Esophagus muscularis mucosa (tissue), 4 donors: ENCODE measurements at regions of chr10 and their contacts with region 1.

Region 1: DNA sequence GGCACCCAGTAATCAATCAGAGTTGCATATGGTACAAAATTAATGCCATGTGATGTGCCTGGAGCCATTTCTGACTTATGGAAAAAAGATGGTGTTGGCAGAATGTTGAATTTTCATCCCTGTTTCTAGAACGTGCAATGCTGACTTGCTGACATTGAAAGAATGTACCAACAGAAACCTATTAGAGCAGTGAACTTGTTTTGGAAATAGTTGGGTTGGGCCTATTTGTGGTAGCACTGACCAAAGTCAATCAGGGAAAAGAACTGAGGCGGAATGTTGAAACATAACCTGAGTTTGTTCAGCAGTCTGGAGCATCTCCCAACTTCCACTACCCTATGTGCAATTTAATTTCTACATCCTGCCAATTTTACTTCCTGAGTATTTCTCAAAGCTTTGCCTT is 11.7 kb upstream of the KIAA1217 start:
- DNase-seq: no peak
- H3K4me3 ChIP-seq: no peak overlapping the region
- H3K27ac ChIP-seq: no peak overlapping the region
- H3K4me1 ChIP-seq: peaks cover 4 to 9% (median 6%) of the 10 kb centered on the region in 4 donors
- H3K27me3 ChIP-seq: no peaks in the 10 kb centered on the region
- CTCF ChIP-seq: no peak
- EP300 ChIP-seq: no peak
- POLR2A ChIP-seq: no peak

Region 2: GRCh38 chr10:23314835-23315239 is 882.4 kb before region 1 on chr10:
- intact Hi-C with region 1: loop called (anchors 10 kb)
- DNase-seq: peak; percentile 64
- H3K4me3 ChIP-seq: no peak overlapping the region
- H3K27ac ChIP-seq: no peak overlapping the region
- H3K4me1 ChIP-seq: peaks cover 0 to 20% (median 2%) of the 10 kb centered on the region in 4 donors
- H3K27me3 ChIP-seq: no peaks in the 10 kb centered on the region
- CTCF ChIP-seq: peak; percentile 68 to 73 (median 71)
- EP300 ChIP-seq: no peak
- POLR2A ChIP-seq: no peak

Region 3: GRCh38 chr10:23516530-23516929 is 680.7 kb before region 1 on chr10:
- intact Hi-C with region 1: loop called (anchors 10 kb)
- DNase-seq: no peak
- H3K4me3 ChIP-seq: no peak overlapping the region
- H3K27ac ChIP-seq: no peak overlapping the region
- H3K4me1 ChIP-seq: no peaks in the 10 kb centered on the region
- H3K27me3 ChIP-seq: peaks cover 0 to 9% (median 0%) of the 10 kb centered on the region in 4 donors
- CTCF ChIP-seq: peak; percentile 17 to 37 (median 33)
- EP300 ChIP-seq: no peak
- POLR2A ChIP-seq: no peak

Region 4: DNA sequence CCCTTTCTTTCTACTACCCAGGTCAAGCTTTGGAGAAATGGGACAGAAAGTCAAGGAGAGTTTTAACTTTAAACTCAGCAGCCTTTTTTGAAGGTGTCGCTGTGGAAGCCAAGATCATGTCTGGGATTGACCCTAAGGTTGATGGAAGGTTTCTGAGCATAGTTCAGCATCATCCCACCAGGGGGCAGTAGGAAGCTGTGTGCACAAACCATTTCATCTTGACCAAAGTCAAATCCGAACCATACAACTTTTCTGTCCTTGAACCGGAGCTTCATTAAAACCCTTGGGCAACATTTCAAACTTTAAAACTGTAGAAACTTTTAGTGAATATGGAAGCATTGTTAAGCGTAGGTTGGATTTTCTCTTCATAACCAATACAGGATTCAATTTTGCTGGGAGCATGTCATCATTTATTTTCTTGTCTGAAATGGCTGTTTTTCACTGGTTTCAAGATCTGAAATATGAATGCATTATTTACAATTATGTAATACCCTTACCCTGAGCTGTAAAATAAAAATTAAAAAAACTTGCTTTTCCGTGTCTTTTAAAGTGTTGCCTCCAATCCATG is 202.7 kb before region 1 on chr10:
- intact Hi-C with region 1: loop called (anchors 2 kb)
- DNase-seq: no peak
- H3K4me3 ChIP-seq: peak overlapping the region in 1 of 4 donors; percentile 5
- H3K27ac ChIP-seq: no peak overlapping the region
- H3K4me1 ChIP-seq: peaks cover 0 to 5% (median 0%) of the 10 kb centered on the region in 4 donors
- H3K27me3 ChIP-seq: no peaks in the 10 kb centered on the region
- CTCF ChIP-seq: peak; percentile 59 to 77 (median 72)
- EP300 ChIP-seq: no peak
- POLR2A ChIP-seq: no peak

Region 5: DNA sequence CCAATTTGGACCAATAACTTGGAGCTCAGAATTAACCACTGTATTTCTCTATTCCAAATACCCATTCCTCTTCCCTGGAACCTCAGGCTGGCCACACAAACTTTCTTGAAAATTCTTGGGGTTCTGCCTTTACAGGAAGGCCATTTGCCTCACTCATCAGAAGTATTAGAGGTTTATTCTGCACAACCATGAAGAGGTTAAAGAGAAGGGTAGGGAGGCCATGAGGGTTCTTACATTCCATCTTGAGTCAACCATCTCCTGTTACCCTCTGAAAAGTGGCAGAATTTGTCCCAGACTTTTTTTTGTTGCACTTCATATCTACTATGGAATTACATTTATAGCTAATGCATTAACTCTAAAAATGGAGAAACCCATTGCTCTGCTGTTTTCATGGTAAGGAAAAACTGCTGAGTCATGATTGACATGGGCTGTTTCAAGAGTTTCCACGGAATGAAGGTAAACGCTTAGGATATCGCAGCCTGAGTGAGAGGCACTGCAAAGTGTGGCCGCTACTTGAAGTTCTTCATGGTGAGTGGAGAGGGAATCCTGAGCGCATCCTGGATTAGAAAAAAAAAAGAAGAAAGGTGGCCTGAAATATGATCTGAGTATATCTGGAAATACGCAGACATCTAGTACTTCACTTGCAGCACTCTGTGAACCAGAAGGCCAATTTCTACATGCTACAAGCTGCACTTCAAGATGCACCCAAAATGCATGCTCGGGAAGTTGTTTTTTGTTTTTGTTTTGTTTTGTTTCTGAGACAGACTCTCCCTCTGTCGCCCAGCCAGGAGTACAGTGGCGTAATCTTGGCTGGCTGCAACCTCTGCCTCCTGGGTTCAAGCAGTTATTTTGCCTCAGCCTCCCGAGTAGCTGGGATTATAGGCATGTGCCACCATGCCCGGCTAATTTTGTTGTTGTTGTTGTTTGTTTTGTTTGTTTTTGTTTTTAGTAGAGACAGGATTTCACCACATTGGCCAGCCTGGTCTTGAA is 95.3 kb after region 1 on chr10:
- intact Hi-C with region 1: no loop called
- DNase-seq: no peak
- H3K4me3 ChIP-seq: no peak overlapping the region
- H3K27ac ChIP-seq: peak overlapping the region in 2 of 4 donors; percentile 16 to 30
- H3K4me1 ChIP-seq: peaks cover 7 to 24% (median 16%) of the 10 kb centered on the region in 4 donors
- H3K27me3 ChIP-seq: no peaks in the 10 kb centered on the region
- CTCF ChIP-seq: no peak
- EP300 ChIP-seq: no peak
- POLR2A ChIP-seq: no peak

Region 6: GRCh38 chr10:24360282-24361127 is 163.2 kb after region 1 on chr10:
- intact Hi-C with region 1: loop called (anchors 5 kb)
- DNase-seq: no peak
- H3K4me3 ChIP-seq: no peak overlapping the region
- H3K27ac ChIP-seq: no peak overlapping the region
- H3K4me1 ChIP-seq: peaks cover 0 to 10% (median 8%) of the 10 kb centered on the region in 4 donors
- H3K27me3 ChIP-seq: no peaks in the 10 kb centered on the region
- CTCF ChIP-seq: peak; percentile 43 to 65 (median 56)
- EP300 ChIP-seq: no peak
- POLR2A ChIP-seq: no peak

Region 7: GRCh38 chr10:24518981-24519597 is 321.8 kb after region 1 on chr10:
- intact Hi-C with region 1: loop called (anchors 10 kb)
- DNase-seq: no peak
- H3K4me3 ChIP-seq: peak overlapping the region in 1 of 4 donors; percentile 7
- H3K27ac ChIP-seq: peak overlapping the region in 1 of 4 donors; percentile 11
- H3K4me1 ChIP-seq: peaks cover 0 to 15% (median 8%) of the 10 kb centered on the region in 4 donors
- H3K27me3 ChIP-seq: no peaks in the 10 kb centered on the region
- CTCF ChIP-seq: peak; percentile 63 to 76 (median 73)
- EP300 ChIP-seq: no peak
- POLR2A ChIP-seq: no peak